ENCODE measurements at regions of chr10 and their contacts with region 1.

Region 1: GRCh38 chr10:69123747-69124562 is at the start of gene VPS26A:
- DNase-seq: peak; percentile 100
- H3K4me3 Mint-ChIP-seq: peak within 1 kb of the TSS; percentile 97
- H3K27ac Mint-ChIP-seq: peak within 1 kb of the TSS; percentile 95
- H3K4me1 Mint-ChIP-seq: no peaks in the 10 kb centered on the region
- H3K27me3 Mint-ChIP-seq: no peaks in the 10 kb centered on the region
- CTCF ChIP-seq: no peak
- total RNA-seq, gene VPS26A: 77.1 and 80.3 TPM in 2 replicates

Region 2: DNA sequence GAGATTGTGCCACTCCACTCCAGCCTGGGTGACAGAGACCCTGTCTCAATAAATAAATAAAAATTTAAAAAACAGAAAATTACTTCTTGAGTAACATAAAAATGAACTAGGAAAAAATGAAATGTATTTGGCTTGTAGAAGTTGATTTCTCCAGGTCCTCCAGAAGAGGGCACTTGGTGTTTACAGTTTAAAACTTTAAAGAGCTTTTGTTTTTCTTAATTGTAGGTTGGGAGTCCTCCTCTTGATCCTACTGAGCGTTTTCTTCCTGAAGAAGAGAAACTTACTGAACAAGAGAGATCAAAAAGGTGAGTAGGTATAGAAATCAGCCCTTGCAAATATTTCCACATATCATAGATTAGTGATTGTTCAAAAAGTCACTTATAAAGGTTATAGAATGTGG is 119.1 kb before region 1 on chr10:
- CTCF ChIA-PET with region 1: interaction called, 13 read pairs
- intact Hi-C with region 1: no loop called
- DNase-seq: no peak
- H3K4me3 Mint-ChIP-seq: no peak overlapping the region
- H3K27ac Mint-ChIP-seq: no peak overlapping the region
- H3K4me1 Mint-ChIP-seq: no peaks in the 10 kb centered on the region
- H3K27me3 Mint-ChIP-seq: no peaks in the 10 kb centered on the region
- CTCF ChIP-seq: peak; percentile 41

Region 3: DNA sequence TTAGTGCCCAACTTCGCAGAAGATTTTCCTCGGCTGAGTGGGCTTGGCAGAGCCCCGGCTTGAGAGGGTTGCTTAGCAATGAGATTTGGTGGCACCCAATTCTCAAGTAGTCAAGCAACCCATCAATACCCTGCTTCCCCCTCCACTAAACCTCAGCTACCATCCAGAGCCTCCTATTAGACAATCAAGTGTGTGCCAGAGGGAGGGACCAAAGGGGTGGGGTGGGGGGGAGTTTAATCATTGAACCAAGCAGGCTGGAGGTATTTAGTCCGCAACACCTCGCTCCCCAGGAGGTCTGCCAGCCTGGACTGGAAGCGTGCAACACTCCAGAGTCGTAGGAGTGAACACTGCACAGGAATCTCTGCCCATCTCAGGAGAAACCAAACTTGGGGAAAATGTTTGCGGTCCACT is 96.1 kb after region 1 on chr10 and contains the start of gene HKDC1:
- CTCF ChIA-PET with region 1: no interaction called
- intact Hi-C with region 1: loop called (anchors 2 kb)
- DNase-seq: peak; percentile 84
- H3K4me3 Mint-ChIP-seq: peak within 1 kb of the TSS; percentile 88
- H3K27ac Mint-ChIP-seq: peak within 1 kb of the TSS; percentile 92
- H3K4me1 Mint-ChIP-seq: peaks cover 35% of the 10 kb centered on the region
- H3K27me3 Mint-ChIP-seq: no peaks in the 10 kb centered on the region
- CTCF ChIP-seq: no peak
- total RNA-seq, gene HKDC1: 112 and 113 TPM in 2 replicates

Region 4: GRCh38 chr10:69360485-69361324 is 236.8 kb after region 1 on chr10:
- CTCF ChIA-PET with region 1: no interaction called
- intact Hi-C with region 1: no loop called
- DNase-seq: peak; percentile 85
- H3K4me3 Mint-ChIP-seq: peak overlapping the region; percentile 13
- H3K27ac Mint-ChIP-seq: peak overlapping the region; percentile 50
- H3K4me1 Mint-ChIP-seq: peaks cover 51% of the 10 kb centered on the region
- H3K27me3 Mint-ChIP-seq: no peaks in the 10 kb centered on the region
- CTCF ChIP-seq: no peak